GM12878 (cell line): ENCODE measurements at regions of chr11 and their contacts with region 1.

Region 1: DNA sequence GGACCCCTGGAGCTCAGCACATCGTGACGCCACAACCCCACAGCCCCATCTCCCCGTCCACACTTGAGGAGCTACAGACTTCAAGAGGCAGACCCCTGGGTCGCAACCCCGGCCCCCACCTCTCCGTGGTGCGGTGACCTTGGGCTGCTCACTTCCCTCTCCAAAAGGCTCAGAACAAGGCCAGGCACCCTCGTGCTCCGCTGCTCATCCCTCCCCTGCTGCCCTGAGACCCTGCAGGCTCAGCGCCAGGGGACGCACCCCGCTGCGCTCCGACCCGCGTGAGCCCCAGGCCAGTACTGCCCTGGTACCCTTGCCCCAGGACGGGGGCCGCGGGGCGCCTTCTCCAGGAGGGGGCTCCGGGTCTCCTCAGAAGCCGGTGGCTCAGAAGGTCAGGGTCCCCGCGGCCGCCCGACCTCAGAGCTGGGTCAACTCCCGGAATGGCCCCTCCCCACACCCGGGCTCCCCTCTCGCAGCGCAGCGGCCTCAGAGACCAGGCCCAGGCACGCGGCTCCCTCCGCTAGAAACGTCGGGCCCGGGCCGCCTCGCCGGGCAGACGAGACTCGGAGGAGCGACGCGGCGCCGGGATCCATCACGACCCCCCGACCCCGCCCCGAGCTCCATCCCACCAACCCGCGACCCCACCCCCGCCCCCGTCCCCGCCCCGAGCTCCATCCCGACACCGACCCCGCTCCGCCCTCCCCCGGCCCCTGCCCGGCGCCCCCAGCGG is 563 bp downstream of the GATD1 start:
- DNase-seq: no peak
- ATAC-seq: peak; percentile 59
- H3K4me3 ChIP-seq: peak overlapping the region; percentile 99
- H3K27ac ChIP-seq: peak overlapping the region; percentile 78
- H3K4me1 ChIP-seq: peaks cover 13% of the 10 kb centered on the region
- H3K27me3 ChIP-seq: no peaks in the 10 kb centered on the region
- CTCF ChIP-seq: peak in 1 of 3 experiments; percentile 10; a peak in 1 of 6 replicates
- EP300 ChIP-seq: no peak
- POLR2A ChIP-seq: peak; percentile 71
- RAD21 ChIP-seq: no peak

Region 2: DNA sequence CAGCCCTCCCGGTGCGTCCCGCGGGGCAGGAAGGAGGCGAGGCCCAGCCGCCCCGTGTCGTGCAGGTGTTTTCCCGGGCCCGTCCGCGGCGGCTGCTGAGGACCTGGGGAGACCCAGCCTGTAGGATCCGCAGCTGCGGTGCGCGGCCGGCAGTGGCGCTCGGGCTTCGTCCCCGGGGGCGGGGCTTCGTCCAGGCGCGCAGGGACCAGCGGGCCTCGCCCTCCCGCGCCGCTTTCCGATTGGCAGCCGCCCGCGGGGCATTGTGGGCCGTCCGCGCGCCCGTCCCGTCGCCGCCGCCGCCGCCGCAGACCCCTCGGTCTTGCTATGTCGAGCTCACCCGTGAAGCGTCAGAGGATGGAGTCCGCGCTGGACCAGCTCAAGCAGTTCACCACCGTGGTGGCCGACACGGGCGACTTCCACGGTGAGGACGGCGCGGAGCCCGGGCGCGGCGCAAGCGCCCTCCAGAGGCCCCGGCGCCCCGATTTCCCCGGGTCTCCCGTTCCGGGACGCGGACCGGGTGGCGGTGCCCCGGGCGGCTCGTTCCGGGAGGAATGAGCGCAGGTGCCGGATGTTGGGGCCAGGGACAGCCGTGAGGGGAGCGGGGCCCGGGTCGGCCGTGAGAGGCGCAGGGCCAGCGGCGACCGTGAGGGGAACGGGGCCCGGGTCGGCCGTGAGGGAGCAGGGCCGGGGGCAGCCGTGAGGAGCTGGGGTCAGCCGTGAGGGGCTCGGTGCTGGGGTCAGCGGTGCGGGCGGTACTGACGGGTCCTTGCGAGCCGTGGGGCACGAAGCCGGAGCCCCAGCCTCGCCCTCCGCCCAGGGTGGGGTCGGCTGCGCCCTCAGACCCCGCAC is 29.3 kb before region 1 on chr11 and contains the start of gene TALDO1:
- CTCF ChIA-PET with region 1: no interaction called
- POLR2A ChIA-PET with region 1: interaction called, 10 read pairs
- RAD21 ChIA-PET with region 1: no interaction called
- SMC1A ChIA-PET with region 1: no interaction called
- in situ Hi-C with region 1: no loop called
- intact Hi-C with region 1: no loop called
- DNase-seq: peak; percentile 42
- ATAC-seq: peak; percentile 97
- H3K4me3 ChIP-seq: peak within 1 kb of the TSS; percentile 90
- H3K27ac ChIP-seq: peak within 1 kb of the TSS; percentile 81
- H3K4me1 ChIP-seq: peaks cover 4% of the 10 kb centered on the region
- H3K27me3 ChIP-seq: no peaks in the 10 kb centered on the region
- CTCF ChIP-seq: peak in 2 of 3 experiments; percentile 21 to 35; a peak in 2 of 6 replicates
- EP300 ChIP-seq: no peak
- POLR2A ChIP-seq: peak; percentile 86
- RAD21 ChIP-seq: no peak
- polyA plus RNA-seq, gene TALDO1: 121 to 189 TPM